ENCODE measurements at regions of chr1 and their contacts with region 1.

Region 1: DNA sequence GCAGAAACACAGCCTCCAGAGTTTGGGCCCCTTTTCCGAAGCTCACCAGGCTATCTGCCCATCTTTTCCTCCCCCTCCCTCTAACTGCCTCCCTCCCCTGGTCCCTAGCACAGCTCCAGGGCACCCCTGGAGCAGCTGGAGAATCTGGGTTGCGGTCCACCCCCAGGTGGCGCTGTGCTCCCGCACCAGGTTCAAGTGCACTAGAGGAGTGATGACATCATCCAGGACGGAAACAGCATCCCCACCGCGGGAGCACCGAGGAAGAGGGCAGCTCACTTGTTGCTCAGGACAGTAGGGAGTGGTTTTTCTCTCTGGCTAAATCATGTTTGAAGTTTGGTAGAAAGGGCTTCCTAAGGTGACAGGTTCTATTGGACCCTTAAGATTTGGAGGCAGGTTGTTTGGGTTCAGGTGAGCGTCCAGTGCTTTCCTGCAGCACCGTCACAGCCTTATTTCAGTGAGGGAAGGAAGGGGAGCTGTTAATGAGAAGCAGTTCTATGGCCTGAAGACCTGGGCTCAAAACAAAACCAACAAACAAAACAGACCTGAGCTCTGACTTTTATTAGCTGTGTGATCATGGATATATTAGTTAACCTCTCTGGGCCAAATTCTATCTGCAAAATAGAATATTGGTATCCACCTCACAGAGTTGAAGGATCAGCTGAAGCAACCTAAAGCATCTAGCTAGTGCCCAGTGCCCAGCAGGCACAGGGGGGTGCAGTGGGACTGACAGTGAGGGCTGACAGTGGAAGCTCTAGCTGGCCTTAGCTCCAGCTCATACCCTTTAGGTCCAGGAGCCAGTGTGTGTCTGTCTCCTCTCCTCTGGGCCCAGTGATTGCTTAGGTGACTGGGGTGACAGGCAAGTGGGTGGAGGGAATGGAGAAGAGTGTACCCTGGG is 7.5 kb downstream of the SHISA4 start:
- DNase-seq: peak; percentile 92
- H3K4me3 Mint-ChIP-seq: no peak overlapping the region
- H3K27ac Mint-ChIP-seq: peak overlapping the region; percentile 54
- H3K4me1 Mint-ChIP-seq: peaks cover 23% of the 10 kb centered on the region
- H3K27me3 Mint-ChIP-seq: peaks cover 45% of the 10 kb centered on the region

Region 2: GRCh38 chr1:201748335-201748734 is 147.8 kb before region 1 on chr1:
- CTCF ChIA-PET with region 1: no interaction called
- DNase-seq: no peak
- H3K4me3 Mint-ChIP-seq: no peak overlapping the region
- H3K27ac Mint-ChIP-seq: no peak overlapping the region
- H3K4me1 Mint-ChIP-seq: peaks cover 10% of the 10 kb centered on the region
- H3K27me3 Mint-ChIP-seq: peaks cover 15% of the 10 kb centered on the region

Region 3: DNA sequence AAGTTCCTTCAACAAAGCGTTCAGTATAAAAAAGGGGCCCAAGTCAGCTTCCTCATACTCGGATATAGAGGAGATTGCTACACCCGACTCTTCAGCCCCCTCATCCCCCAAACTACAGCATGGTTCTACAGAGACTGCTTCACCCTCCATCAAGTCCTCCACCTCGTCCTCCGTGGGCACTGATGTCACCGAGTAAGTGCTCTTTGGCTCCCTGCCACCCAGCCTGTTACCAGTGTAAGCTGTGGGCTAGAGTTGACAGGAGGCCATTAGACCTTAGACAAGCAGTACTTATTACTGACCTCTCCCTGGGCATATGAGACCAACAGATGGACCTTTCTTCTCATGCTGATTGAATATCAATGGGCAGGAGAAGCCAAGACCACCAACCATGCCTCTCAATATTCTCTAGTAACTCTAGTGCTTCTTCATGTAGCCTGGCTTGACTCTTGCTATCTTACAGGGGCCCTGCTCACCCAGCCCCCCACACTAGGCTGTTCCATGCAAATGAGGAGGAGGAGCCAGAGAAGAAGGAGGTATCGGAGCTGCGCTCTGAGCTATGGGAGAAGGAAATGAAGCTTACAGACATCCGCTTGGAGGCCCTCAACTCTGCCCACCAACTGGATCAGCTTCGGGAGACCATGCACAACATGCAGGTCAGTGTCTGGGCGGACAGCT is 88.1 kb before region 1 on chr1:
- CTCF ChIA-PET with region 1: no interaction called
- DNase-seq: no peak
- H3K4me3 Mint-ChIP-seq: no peak overlapping the region
- H3K27ac Mint-ChIP-seq: no peak overlapping the region
- H3K4me1 Mint-ChIP-seq: no peaks in the 10 kb centered on the region
- H3K27me3 Mint-ChIP-seq: no peaks in the 10 kb centered on the region

Region 4: DNA sequence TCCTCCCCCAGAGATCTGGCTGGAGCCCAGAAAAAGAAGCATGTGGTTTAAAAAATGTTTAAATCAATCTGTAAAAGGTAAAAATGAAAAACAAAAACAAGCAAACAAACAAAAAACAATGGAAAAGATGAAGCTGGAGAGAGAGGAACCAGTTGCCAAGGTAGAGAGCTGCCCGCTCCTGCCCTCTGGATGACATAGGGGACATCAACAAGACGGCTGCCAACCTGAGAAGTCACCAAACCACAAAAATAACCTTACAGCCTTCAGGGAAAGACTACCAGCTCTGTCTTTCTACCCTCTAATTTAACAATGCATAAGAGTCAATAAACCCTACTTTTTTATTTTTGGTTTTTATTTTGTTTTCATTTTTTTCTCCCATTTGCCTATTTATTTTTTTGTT is 75.7 kb before region 1 on chr1:
- CTCF ChIA-PET with region 1: no interaction called
- DNase-seq: no peak
- H3K4me3 Mint-ChIP-seq: no peak overlapping the region
- H3K27ac Mint-ChIP-seq: no peak overlapping the region
- H3K4me1 Mint-ChIP-seq: no peaks in the 10 kb centered on the region
- H3K27me3 Mint-ChIP-seq: no peaks in the 10 kb centered on the region

Region 5: GRCh38 chr1:201885531-201886075 is 10.6 kb before region 1 on chr1:
- CTCF ChIA-PET with region 1: interaction called, 18 read pairs
- DNase-seq: no peak
- H3K4me3 Mint-ChIP-seq: no peak overlapping the region
- H3K27ac Mint-ChIP-seq: no peak overlapping the region
- H3K4me1 Mint-ChIP-seq: peaks cover 3% of the 10 kb centered on the region
- H3K27me3 Mint-ChIP-seq: peaks cover 69% of the 10 kb centered on the region

Region 6: GRCh38 chr1:201955009-201955728 is 59.0 kb after region 1 on chr1 and contains the start of gene TIMM17A:
- CTCF ChIA-PET with region 1: interaction called, 15 read pairs
- DNase-seq: peak; percentile 97
- H3K4me3 Mint-ChIP-seq: peak within 1 kb of the TSS; percentile 95
- H3K27ac Mint-ChIP-seq: peak within 1 kb of the TSS; percentile 91
- H3K4me1 Mint-ChIP-seq: peaks cover 24% of the 10 kb centered on the region
- H3K27me3 Mint-ChIP-seq: peaks cover 11% of the 10 kb centered on the region

Region 7: DNA sequence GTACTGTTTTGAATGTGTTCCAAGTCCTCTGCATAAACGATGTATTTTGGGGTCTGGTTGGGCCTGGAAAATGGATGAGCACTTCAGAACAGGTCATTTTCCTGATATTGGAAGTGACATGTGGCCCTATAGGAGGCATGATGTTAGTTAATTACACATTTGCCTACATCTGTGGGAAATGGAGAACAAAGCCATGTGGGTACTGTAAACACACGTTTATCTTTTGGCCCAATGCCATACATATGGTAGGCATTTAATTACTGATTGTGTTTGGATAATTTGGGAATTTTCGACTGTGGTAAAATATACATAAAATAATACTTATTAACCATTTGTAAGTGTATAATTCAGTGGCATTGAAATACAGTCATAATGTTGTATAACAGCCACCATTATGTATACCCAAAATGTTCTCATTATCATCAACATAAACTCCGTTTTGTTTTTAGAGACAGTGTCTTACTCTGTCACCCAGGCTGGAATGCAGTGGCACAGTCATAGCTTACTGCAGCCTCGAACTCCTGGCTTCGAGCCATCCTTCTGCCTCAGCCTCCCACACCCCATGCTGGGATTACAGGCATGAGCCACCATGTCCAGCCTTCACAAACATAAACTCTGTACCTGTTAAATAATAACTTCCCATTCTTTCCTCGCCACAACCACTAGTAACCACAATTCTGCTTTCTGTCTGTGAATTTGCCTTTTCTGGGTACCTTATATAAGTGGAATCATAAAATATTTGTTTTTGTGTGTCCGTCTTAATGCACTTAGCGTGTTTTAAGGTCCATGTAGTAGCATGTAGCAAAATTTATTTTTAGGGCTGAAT is 74.4 kb after region 1 on chr1:
- CTCF ChIA-PET with region 1: interaction called, 81 read pairs
- DNase-seq: no peak
- H3K4me3 Mint-ChIP-seq: no peak overlapping the region
- H3K27ac Mint-ChIP-seq: no peak overlapping the region
- H3K4me1 Mint-ChIP-seq: no peaks in the 10 kb centered on the region
- H3K27me3 Mint-ChIP-seq: peaks cover 10% of the 10 kb centered on the region

Region 8: GRCh38 chr1:201990427-201990826 is 94.3 kb after region 1 on chr1:
- CTCF ChIA-PET with region 1: no interaction called
- DNase-seq: no peak
- H3K4me3 Mint-ChIP-seq: no peak overlapping the region
- H3K27ac Mint-ChIP-seq: no peak overlapping the region
- H3K4me1 Mint-ChIP-seq: no peaks in the 10 kb centered on the region
- H3K27me3 Mint-ChIP-seq: no peaks in the 10 kb centered on the region

Region 9: GRCh38 chr1:202135221-202135721 is 239.1 kb after region 1 on chr1:
- CTCF ChIA-PET with region 1: interaction called, 11 read pairs
- DNase-seq: peak; percentile 61
- H3K4me3 Mint-ChIP-seq: no peak overlapping the region
- H3K27ac Mint-ChIP-seq: no peak overlapping the region
- H3K4me1 Mint-ChIP-seq: peaks cover 7% of the 10 kb centered on the region
- H3K27me3 Mint-ChIP-seq: no peaks in the 10 kb centered on the region

Measured in activated naive CD4-positive, alpha-beta T cell treated with anti-CD3 and anti-CD28 coated beads, Interleukin-2, amount 10 ng/mL, durations not matched to agents 7 days and 5 days (primary cell).